Activated CD4-positive, alpha-beta memory T cell treated with anti-CD3 and anti-CD28 coated beads for 36 hours (primary cell): ENCODE measurements at regions of chr21 and their contacts with region 1.

Region 1: GRCh38 chr21:42238185-42238934 is 19.4 kb downstream of the ABCG1 start:
- DNase-seq: peak; percentile 67
- H3K4me3 Mint-ChIP-seq: peak overlapping the region; percentile 42
- H3K27ac Mint-ChIP-seq: peak overlapping the region; percentile 80
- H3K4me1 Mint-ChIP-seq: peaks cover 61% of the 10 kb centered on the region
- H3K27me3 Mint-ChIP-seq: no peaks in the 10 kb centered on the region

Region 2: GRCh38 chr21:42125571-42126544 is 112.5 kb before region 1 on chr21:
- CTCF ChIA-PET with region 1: no interaction called
- POLR2A ChIA-PET with region 1: no interaction called
- intact Hi-C with region 1: no loop called
- DNase-seq: no peak
- H3K4me3 Mint-ChIP-seq: no peak overlapping the region
- H3K27ac Mint-ChIP-seq: no peak overlapping the region
- H3K4me1 Mint-ChIP-seq: peaks cover 2% of the 10 kb centered on the region
- H3K27me3 Mint-ChIP-seq: peaks cover 49% of the 10 kb centered on the region

Region 3: GRCh38 chr21:42145569-42146272 is 92.6 kb before region 1 on chr21:
- CTCF ChIA-PET with region 1: interaction called, 20 read pairs
- POLR2A ChIA-PET with region 1: no interaction called
- intact Hi-C with region 1: no loop called
- DNase-seq: peak; percentile 75
- H3K4me3 Mint-ChIP-seq: no peak overlapping the region
- H3K27ac Mint-ChIP-seq: no peak overlapping the region
- H3K4me1 Mint-ChIP-seq: peaks cover 3% of the 10 kb centered on the region
- H3K27me3 Mint-ChIP-seq: no peaks in the 10 kb centered on the region

Region 4: GRCh38 chr21:42164064-42164789 is 74.1 kb before region 1 on chr21:
- CTCF ChIA-PET with region 1: interaction called, 19 read pairs
- POLR2A ChIA-PET with region 1: no interaction called
- intact Hi-C with region 1: no loop called
- DNase-seq: peak; percentile 76
- H3K4me3 Mint-ChIP-seq: no peak overlapping the region
- H3K27ac Mint-ChIP-seq: no peak overlapping the region
- H3K4me1 Mint-ChIP-seq: peaks cover 13% of the 10 kb centered on the region
- H3K27me3 Mint-ChIP-seq: no peaks in the 10 kb centered on the region

Region 5: DNA sequence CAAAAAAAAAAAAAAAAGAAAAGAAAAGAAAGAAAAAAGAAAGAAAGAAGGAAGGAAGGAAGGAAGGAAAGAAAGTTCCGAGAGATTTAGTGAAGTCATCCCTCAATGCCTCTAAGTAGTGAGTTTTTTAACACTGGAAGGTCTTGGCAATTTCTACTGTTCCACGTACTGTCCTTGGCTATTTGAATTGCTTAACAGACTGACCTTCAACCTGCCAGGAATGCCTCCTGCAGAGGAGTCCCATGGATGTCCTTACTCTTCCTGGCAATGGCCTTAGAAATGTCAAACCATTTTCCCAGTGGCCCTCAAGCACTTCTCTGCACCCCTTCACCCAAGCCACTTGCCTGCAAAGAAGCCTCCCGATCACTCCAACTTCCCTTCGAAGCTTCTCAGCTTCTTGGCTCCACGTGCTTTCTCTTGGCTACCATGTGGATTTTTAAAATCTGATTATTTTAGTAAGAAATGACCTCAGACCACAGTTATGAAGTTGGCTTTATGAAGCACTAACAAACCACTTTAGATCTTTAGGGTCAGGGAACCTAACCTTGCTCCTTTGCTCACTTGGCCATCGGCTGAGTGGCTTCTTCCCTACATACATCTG is 63.1 kb before region 1 on chr21:
- CTCF ChIA-PET with region 1: no interaction called
- POLR2A ChIA-PET with region 1: no interaction called
- intact Hi-C with region 1: no loop called
- DNase-seq: no peak
- H3K4me3 Mint-ChIP-seq: no peak overlapping the region
- H3K27ac Mint-ChIP-seq: no peak overlapping the region
- H3K4me1 Mint-ChIP-seq: no peaks in the 10 kb centered on the region
- H3K27me3 Mint-ChIP-seq: no peaks in the 10 kb centered on the region

Region 6: DNA sequence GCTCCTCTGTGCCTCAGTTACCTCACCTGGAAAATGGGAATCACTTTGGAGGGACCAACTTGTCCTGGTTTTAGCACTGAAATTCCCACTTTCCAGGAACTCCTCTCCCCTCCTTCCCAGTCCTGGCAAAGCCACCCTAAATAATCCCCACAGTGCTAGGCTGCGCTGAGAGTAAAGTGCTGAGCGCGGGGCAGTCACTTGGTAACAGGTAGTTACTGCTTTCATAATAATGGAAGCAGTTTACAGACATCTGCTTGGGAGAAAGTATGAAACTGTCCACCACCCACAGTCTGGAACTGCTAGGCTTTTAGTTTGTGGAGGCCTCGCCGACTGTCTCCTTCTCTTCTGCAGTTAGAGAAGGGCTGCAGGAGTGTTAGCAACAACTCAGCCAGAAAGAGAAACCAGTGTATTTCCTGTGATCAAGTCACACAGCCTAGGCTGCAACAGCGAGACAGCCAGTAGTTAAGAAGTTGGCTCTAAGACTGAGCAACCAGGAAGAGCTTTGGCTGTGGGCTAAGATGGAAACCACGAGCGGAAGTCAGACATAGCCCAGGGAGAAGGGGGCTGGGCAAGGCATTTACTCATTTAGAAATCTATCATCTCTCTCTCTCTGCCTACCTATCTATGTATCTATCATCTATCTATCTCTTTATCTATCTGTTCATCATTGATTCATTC is 50.2 kb before region 1 on chr21:
- CTCF ChIA-PET with region 1: interaction called, 12 read pairs
- POLR2A ChIA-PET with region 1: interaction called, 15 read pairs
- intact Hi-C with region 1: loop called (anchors 1 kb)
- DNase-seq: peak; percentile 92
- H3K4me3 Mint-ChIP-seq: peak overlapping the region; percentile 60
- H3K27ac Mint-ChIP-seq: peak overlapping the region; percentile 96
- H3K4me1 Mint-ChIP-seq: peaks cover 62% of the 10 kb centered on the region
- H3K27me3 Mint-ChIP-seq: no peaks in the 10 kb centered on the region

Region 7: DNA sequence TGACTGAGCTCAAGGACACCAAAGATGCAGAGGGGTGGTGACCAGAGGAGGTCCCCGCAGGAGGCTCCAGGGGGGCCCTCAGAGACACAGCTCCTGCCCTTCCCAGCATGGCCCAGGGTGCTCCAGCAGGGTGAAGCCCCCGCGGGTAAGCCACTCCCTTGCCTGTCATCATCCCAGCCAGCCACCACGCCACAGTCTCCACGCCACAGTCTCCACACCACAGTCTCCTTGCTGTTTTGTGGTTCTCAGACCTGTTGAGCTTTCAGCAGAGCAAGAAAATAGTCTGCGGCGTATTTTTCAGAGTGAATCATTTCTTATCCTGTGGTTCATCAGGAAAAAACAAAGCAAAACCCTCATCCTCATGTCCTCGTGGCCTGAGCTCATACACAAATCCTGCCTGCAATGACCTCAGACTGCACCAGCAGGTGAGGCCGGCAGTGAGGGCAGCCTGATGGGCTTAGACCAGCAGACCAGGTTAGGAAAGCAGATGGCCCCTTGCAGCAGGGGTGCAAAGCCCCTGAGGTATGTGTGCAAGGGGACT is 45.2 kb before region 1 on chr21:
- CTCF ChIA-PET with region 1: interaction called, 12 read pairs
- POLR2A ChIA-PET with region 1: interaction called, 15 read pairs
- intact Hi-C with region 1: loop called (anchors 1 kb)
- DNase-seq: peak; percentile 86
- H3K4me3 Mint-ChIP-seq: peak overlapping the region; percentile 15
- H3K27ac Mint-ChIP-seq: peak overlapping the region; percentile 38
- H3K4me1 Mint-ChIP-seq: peaks cover 46% of the 10 kb centered on the region
- H3K27me3 Mint-ChIP-seq: no peaks in the 10 kb centered on the region

Region 8: GRCh38 chr21:42220138-42220701 is 18.1 kb before region 1 on chr21:
- CTCF ChIA-PET with region 1: interaction called, 33 read pairs
- POLR2A ChIA-PET with region 1: interaction called, 121 read pairs
- intact Hi-C with region 1: loop called (anchors 1 kb)
- DNase-seq: peak; percentile 80
- H3K4me3 Mint-ChIP-seq: peak overlapping the region; percentile 78
- H3K27ac Mint-ChIP-seq: peak overlapping the region; percentile 85
- H3K4me1 Mint-ChIP-seq: peaks cover 21% of the 10 kb centered on the region
- H3K27me3 Mint-ChIP-seq: no peaks in the 10 kb centered on the region

Region 9: GRCh38 chr21:42227909-42228708 is 10.3 kb before region 1 on chr21:
- CTCF ChIA-PET with region 1: interaction called, 13 read pairs
- POLR2A ChIA-PET with region 1: interaction called, 28 read pairs
- intact Hi-C with region 1: loop called (anchors 1 kb)
- DNase-seq: peak; percentile 96
- H3K4me3 Mint-ChIP-seq: peak overlapping the region; percentile 63
- H3K27ac Mint-ChIP-seq: peak overlapping the region; percentile 93
- H3K4me1 Mint-ChIP-seq: peaks cover 76% of the 10 kb centered on the region
- H3K27me3 Mint-ChIP-seq: no peaks in the 10 kb centered on the region